GM12878 (cell line): ENCODE measurements at regions of chr14 and their contacts with region 1.

Region 1: GRCh38 chr14:89027097-89027740 is 202.8 kb downstream of the TTC8 start:
- DNase-seq: no peak
- ATAC-seq: peak; percentile 97
- H3K4me3 ChIP-seq: peak overlapping the region; percentile 70; the same call in 1 of the 2 replicates
- H3K27ac ChIP-seq: no peak overlapping the region
- H3K4me1 ChIP-seq: peaks cover 4% of the 10 kb centered on the region; the same call in 1 of the 2 replicates
- H3K27me3 ChIP-seq: peaks cover 2 to 6% of the 10 kb centered on the region in 2 experiments
- CTCF ChIP-seq: peak; percentile 63 to 71 (median 63); a peak in 5 of 6 replicates
- EP300 ChIP-seq: no peak
- POLR2A ChIP-seq: no peak
- RAD21 ChIP-seq: peak; percentile 84

Region 2: GRCh38 chr14:89365061-89365801 is 338.0 kb after region 1 on chr14:
- CTCF ChIA-PET with region 1: no interaction called
- POLR2A ChIA-PET with region 1: no interaction called
- RAD21 ChIA-PET with region 1: no interaction called
- SMC1A ChIA-PET with region 1: no interaction called
- in situ Hi-C with region 1: no loop called
- intact Hi-C with region 1: no loop called
- DNase-seq: peak; percentile 81
- ATAC-seq: peak; percentile 96
- H3K4me3 ChIP-seq: peak overlapping the region; percentile 59
- H3K27ac ChIP-seq: peak overlapping the region; percentile 97
- H3K4me1 ChIP-seq: peaks cover 31% of the 10 kb centered on the region
- H3K27me3 ChIP-seq: no peaks in the 10 kb centered on the region
- CTCF ChIP-seq: no peak
- EP300 ChIP-seq: peak; percentile 82 to 90
- POLR2A ChIP-seq: peak; percentile 51; the same call in 1 of the 2 replicates
- RAD21 ChIP-seq: no peak; the same call in 1 of the 2 replicates

Region 3: GRCh38 chr14:89767861-89768268 is 740.6 kb after region 1 on chr14:
- CTCF ChIA-PET with region 1: interaction called, 6 read pairs
- POLR2A ChIA-PET with region 1: no interaction called
- RAD21 ChIA-PET with region 1: interaction called, 3 read pairs
- SMC1A ChIA-PET with region 1: interaction called, 3 read pairs
- in situ Hi-C with region 1: loop called (anchors 25 kb)
- intact Hi-C with region 1: loop called (anchors 5 kb)
- DNase-seq: peak; percentile 65
- ATAC-seq: peak; percentile 94
- H3K4me3 ChIP-seq: no peak overlapping the region
- H3K27ac ChIP-seq: peak overlapping the region; percentile 56
- H3K4me1 ChIP-seq: peaks cover 22% of the 10 kb centered on the region
- H3K27me3 ChIP-seq: no peaks in the 10 kb centered on the region
- CTCF ChIP-seq: peak; percentile 75 to 87 (median 81)
- EP300 ChIP-seq: 0 out of 4 replicates have a peak, but pooled peaks of 1 of the 2 experiments have one; percentile 29
- POLR2A ChIP-seq: no peak
- RAD21 ChIP-seq: peak; percentile 95

Region 4: DNA sequence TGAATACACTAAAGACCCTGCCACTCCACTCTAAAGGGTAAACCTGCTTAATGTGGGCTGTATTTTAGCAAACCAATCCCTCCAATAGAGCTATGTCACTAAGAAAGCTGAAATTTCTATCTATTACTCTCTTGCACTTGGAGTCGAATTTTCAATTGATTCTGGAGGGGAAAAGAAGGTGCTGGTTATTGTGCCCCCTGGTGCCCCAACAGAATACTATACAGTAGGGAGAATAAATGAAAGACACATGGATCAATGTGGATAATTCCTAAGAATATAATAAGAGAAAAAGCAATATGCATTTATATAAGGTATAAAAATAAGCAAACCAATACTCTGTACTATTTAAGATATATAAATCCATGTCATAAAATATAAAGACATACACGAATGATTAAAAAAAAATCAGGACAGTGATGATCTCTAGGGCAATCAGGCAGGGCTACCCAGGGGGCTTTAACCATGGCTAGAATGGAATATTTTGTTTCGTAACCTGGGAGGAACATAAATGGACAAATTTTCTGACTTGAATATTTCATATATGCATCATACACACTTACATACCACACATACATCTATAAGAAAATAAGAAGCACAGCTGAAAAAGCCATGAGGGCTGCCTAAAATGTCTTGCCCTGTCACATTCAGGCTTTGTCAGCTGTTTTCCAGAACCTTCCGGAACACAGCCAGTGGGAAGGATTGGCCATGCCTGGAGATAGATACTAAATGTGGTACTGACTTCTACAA is 872.9 kb after region 1 on chr14:
- CTCF ChIA-PET with region 1: interaction called, 3 read pairs
- POLR2A ChIA-PET with region 1: no interaction called
- RAD21 ChIA-PET with region 1: no interaction called
- SMC1A ChIA-PET with region 1: no interaction called
- in situ Hi-C with region 1: no loop called
- intact Hi-C with region 1: loop called (anchors 5 kb)
- DNase-seq: no peak
- ATAC-seq: peak; percentile 63
- H3K4me3 ChIP-seq: no peak overlapping the region
- H3K27ac ChIP-seq: no peak overlapping the region
- H3K4me1 ChIP-seq: no peaks in the 10 kb centered on the region
- H3K27me3 ChIP-seq: no peaks in the 10 kb centered on the region
- CTCF ChIP-seq: peak; percentile 44 to 56 (median 45); a peak in 5 of 6 replicates
- EP300 ChIP-seq: no peak
- POLR2A ChIP-seq: no peak
- RAD21 ChIP-seq: peak; percentile 77

Region 5: GRCh38 chr14:89915114-89915878 is 888.1 kb after region 1 on chr14:
- CTCF ChIA-PET with region 1: interaction called, 8 read pairs
- POLR2A ChIA-PET with region 1: no interaction called
- RAD21 ChIA-PET with region 1: no interaction called
- SMC1A ChIA-PET with region 1: interaction called, 8 read pairs
- in situ Hi-C with region 1: no loop called
- intact Hi-C with region 1: loop called (anchors 5 kb)
- DNase-seq: peak; percentile 25
- ATAC-seq: peak; percentile 75
- H3K4me3 ChIP-seq: no peak overlapping the region
- H3K27ac ChIP-seq: no peak overlapping the region
- H3K4me1 ChIP-seq: no peaks in the 10 kb centered on the region
- H3K27me3 ChIP-seq: no peaks in the 10 kb centered on the region
- CTCF ChIP-seq: peak; percentile 85 to 92 (median 87)
- EP300 ChIP-seq: no peak
- POLR2A ChIP-seq: no peak
- RAD21 ChIP-seq: peak; percentile 96

Region 6: DNA sequence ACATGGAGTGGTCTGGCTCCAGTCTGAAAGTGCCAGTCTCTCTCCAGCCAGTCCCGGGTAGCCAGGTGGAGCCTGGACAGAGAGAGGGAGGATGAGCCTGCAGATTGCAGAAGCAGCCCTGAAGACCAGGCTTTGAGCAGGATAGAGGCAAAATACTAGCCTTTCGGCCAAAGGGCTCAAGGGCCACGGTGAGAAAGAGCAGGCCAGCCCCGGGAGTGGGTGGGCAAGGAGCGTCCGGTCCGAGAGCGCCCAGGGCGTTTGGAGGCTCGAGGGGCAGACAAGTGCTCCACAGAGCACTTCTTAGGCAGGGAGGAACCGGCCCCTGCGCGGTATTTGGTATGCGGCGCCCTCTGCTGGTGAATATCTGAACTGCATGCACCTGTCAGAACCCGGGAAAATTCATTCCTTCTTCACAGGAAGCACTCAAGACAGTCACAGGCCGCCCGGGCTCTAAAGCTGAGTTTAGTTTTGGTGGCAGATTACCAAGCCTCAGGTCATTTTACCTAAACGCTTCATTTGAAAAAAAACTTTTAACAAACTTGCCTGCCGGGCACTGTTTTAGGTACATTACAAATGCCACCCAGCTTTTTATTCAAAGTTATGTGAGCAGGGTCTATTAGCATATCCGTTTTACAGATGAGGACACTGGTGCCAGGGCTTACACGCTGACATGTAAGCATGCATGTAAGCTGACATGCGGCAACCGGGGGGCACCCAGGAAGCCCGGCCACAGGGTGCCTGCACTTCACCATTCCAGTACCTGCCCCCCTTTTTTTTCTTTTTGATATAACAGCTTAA is 1208.2 kb after region 1 on chr14:
- CTCF ChIA-PET with region 1: no interaction called
- POLR2A ChIA-PET with region 1: no interaction called
- RAD21 ChIA-PET with region 1: no interaction called
- SMC1A ChIA-PET with region 1: no interaction called
- in situ Hi-C with region 1: no loop called
- intact Hi-C with region 1: loop called (anchors 5 kb)
- DNase-seq: no peak
- ATAC-seq: peak; percentile 91
- H3K4me3 ChIP-seq: no peak overlapping the region
- H3K27ac ChIP-seq: no peak overlapping the region
- H3K4me1 ChIP-seq: no peaks in the 10 kb centered on the region
- H3K27me3 ChIP-seq: no peaks in the 10 kb centered on the region
- CTCF ChIP-seq: peak; percentile 83 to 96 (median 89)
- EP300 ChIP-seq: no peak
- POLR2A ChIP-seq: no peak
- RAD21 ChIP-seq: peak; percentile 78